ENCODE measurements at regions of chr12 and their contacts with region 1.

Region 1: GRCh38 chr12:120640840-120641833 is 711 bp downstream of the CABP1 start:
- DNase-seq: no peak
- H3K4me3 ChIP-seq: peak overlapping the region; percentile 15
- CTCF ChIP-seq: no peak

Region 2: GRCh38 chr12:120610560-120610959 is 30.6 kb before region 1 on chr12:
- in situ Hi-C with region 1: no loop called
- DNase-seq: no peak
- H3K4me3 ChIP-seq: no peak overlapping the region
- CTCF ChIP-seq: no peak

Region 3: GRCh38 chr12:121005346-121005815 is 364.2 kb after region 1 on chr12:
- in situ Hi-C with region 1: loop called (anchors 10 kb)
- DNase-seq: no peak
- H3K4me3 ChIP-seq: no peak overlapping the region
- CTCF ChIP-seq: peak; percentile 69